ENCODE measurements at regions of chr9 and their contacts with region 1.

Region 1: GRCh38 chr9:117494401-117495090 is 79.7 kb upstream of the ASTN2 start:
- DNase-seq: no peak
- H3K4me3 ChIP-seq: peak overlapping the region in 57 of 59 donors; percentile 0 to 61 (median 37)
- H3K27ac ChIP-seq: peak overlapping the region in 58 of 59 donors; percentile 13 to 95 (median 74)
- H3K27me3 ChIP-seq: no peaks in the 10 kb centered on the region
- CTCF ChIP-seq: peak in 1 of 56 donors; percentile 5

Region 2: DNA sequence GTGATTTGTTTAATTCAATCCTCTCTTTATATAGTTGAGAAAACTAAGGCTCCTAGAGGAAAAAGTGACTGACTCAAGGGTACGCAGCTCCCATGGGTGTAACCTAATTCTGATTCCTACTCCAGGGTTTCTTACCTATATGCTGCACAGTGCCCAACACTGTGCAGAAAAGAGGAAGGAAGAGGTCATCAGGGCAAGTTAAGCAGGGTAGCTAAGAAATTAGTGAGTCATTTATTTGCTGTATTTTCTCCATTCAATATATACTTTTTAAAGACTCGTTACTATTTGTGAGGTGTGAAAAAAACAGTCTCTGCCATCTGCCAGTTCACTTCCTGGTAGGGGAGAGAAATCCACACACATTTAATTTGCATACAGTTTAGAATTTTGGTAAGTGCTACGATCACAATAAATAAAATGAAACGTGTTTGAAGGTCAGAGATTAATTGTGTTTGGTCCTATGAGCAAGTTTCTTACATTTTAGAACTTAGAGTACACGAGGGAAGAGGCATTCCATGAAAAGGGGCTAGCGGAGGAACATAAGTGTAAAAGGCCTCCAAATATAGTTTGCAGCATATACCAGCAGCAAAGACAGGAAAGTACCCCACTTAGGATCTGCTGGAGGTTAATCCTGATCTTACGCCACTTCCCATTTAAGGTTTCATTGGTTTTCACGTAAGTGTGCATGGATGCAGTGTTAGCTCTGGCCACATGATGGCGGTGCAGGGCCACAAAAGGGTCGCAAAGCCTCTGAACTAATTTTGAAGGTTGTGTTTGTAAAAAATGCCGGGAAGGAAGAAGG is 149.8 kb after region 1 on chr9:
- intact Hi-C with region 1: loop called in 1 of 2 experiments (anchors 5 kb)
- DNase-seq: peak; percentile 69 to 86 (median 80)
- H3K4me3 ChIP-seq: peak overlapping the region in 57 of 59 donors; percentile 1 to 66 (median 43)
- H3K27ac ChIP-seq: peak overlapping the region in 49 of 59 donors; percentile 14 to 85 (median 65)
- H3K27me3 ChIP-seq: peaks cover 0 to 5% (median 0%) of the 10 kb centered on the region in 45 donors
- CTCF ChIP-seq: peak; percentile 84 to 99 (median 97)

Measured in dorsolateral prefrontal cortex (tissue), 120 donors.